ENCODE measurements at regions of chr11 and their contacts with region 1.

Region 1: DNA sequence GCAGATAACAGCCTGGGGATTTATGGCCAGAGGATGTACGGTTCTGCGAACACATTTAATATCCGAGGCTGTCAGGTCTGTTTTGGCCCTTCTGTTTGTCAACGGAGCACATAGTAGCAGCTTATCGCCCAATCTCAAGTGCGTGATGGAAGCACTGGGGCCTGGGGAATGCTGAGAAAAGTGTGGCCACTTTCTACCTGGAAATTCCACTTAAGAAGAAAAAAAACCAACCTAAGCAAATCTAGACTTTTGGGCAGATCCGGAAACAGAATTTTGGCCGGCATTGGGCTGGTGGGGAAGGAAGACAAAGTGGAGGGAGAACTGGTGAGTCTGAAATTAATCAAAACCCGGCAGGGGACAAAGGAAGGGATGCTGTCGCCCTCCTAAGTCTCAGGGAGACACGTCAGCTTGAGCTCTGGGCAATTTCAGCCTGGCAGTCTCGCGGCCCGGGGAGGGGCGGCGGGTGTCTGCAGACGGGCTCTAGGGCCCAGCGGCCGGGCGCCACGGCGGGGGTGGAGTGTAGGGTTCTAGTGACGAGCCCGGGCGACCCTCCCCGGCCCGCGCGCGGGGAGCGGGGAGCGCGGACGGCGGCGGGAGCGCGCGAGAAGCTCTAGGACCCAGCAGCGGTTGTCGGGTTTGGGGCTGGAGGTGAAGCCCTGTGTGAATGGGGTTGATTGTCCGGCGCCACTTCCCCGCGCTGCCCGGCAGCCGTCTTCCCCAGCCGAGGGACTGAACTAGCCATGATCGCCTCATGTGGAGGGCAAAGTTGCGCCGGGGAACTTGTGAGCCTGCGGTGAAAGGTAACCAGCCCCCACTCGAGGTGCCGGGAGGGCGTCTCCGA is at the start of gene AMOTL1:
- DNase-seq: peak; percentile 83
- H3K4me3 Mint-ChIP-seq: peak within 1 kb of the TSS; percentile 89
- H3K27ac Mint-ChIP-seq: peak within 1 kb of the TSS; percentile 90
- H3K4me1 Mint-ChIP-seq: peaks cover 32% of the 10 kb centered on the region
- H3K27me3 Mint-ChIP-seq: no peaks in the 10 kb centered on the region
- CTCF ChIP-seq: no peak
- total RNA-seq, gene AMOTL1: 76.6 and 77.0 TPM in 2 replicates

Region 2: GRCh38 chr11:94433049-94433448 is 334.9 kb before region 1 on chr11:
- CTCF ChIA-PET with region 1: no interaction called
- POLR2A ChIA-PET with region 1: no interaction called
- intact Hi-C with region 1: no loop called
- DNase-seq: no peak
- H3K4me3 Mint-ChIP-seq: no peak overlapping the region
- H3K27ac Mint-ChIP-seq: no peak overlapping the region
- H3K4me1 Mint-ChIP-seq: no peaks in the 10 kb centered on the region
- H3K27me3 Mint-ChIP-seq: no peaks in the 10 kb centered on the region
- CTCF ChIP-seq: no peak

Region 3: DNA sequence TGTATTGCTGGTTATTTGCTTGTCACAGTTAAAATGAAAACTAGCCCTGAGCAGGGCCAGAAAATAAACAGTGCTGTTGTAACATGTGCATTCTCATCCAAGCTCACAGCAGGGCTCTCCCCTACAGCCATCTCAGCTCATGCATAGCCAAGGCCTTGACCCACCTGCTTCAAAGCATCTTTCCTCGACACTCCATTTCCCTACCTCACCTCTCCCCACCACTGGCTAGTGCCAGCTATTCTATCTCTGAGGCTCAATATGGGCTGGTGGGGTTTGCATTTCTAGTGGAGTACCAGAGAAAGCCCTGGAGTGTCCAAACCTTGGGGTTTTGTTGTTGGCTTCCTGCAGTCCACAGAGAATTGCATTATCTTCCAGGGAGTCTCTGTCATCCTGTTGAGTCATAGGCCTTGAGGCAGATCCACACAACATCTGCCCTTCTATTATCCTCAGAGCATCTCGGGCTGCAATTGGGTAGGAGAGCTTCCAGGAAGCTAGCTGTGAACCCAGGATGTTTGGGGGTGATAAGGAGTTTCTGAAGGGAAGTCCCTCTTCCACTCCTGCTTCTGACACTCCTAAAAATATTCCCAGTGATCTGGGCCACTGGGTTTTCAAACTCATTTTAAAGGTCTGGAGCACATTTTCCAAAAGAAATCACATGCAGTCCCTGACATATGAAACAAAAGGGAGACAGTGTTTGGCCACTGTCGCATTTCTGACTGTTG is 35.9 kb before region 1 on chr11:
- CTCF ChIA-PET with region 1: interaction called, 3 read pairs
- POLR2A ChIA-PET with region 1: interaction called, 4 read pairs
- intact Hi-C with region 1: loop called (anchors 2 kb)
- DNase-seq: peak; percentile 95
- H3K4me3 Mint-ChIP-seq: no peak overlapping the region
- H3K27ac Mint-ChIP-seq: peak overlapping the region; percentile 77
- H3K4me1 Mint-ChIP-seq: peaks cover 34% of the 10 kb centered on the region
- H3K27me3 Mint-ChIP-seq: no peaks in the 10 kb centered on the region
- CTCF ChIP-seq: no peak

Region 4: DNA sequence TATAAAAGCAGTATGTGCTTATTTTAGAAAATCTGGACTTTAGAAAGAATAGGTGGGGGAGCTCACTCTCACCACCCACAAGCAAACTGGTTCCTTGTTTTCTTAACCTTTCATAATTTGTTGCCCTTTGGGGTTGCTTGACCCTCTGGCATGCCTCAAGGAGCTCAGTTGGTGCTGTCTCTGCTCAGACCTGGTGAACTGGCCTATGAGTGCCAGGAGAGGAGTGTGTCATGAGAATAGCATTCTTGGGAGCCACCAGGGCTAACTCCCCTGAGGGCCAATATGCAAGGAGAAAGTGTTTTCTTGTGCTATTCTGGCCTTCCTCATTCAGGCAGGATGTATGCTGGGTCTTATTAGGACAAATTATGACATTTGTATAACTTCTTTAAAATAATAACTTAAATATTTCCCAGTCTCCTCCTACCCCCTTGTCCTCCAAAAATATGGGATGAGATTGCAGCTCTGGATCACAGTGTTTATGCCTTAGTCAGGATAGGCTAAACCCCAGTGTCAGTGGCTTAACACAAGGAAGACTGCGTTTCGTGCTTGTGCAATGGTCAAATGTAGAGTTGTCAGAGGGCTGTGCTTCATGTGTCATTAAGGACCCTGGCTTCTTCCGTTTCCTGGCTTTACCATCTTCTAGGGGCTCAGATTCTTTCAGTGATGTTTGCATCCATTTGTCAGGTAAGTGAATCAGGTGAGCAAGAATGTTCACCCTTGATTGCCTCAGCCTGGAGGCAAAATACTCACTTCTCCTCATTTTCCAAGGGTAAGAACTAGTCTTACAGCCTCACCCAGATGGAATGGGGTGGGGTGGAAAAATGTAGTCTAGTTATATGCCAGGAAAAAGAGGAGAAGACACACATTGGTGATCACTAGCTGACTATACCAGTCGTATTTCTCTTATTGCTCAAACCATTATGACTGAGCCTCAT is 20.6 kb before region 1 on chr11:
- CTCF ChIA-PET with region 1: interaction called, 4 read pairs
- POLR2A ChIA-PET with region 1: interaction called, 52 read pairs
- intact Hi-C with region 1: loop called (anchors 2 kb)
- DNase-seq: peak; percentile 64
- H3K4me3 Mint-ChIP-seq: peak overlapping the region; percentile 2
- H3K27ac Mint-ChIP-seq: peak overlapping the region; percentile 95
- H3K4me1 Mint-ChIP-seq: peaks cover 59% of the 10 kb centered on the region
- H3K27me3 Mint-ChIP-seq: no peaks in the 10 kb centered on the region
- CTCF ChIP-seq: no peak

Region 5: GRCh38 chr11:94786264-94787126 is 18.5 kb after region 1 on chr11:
- CTCF ChIA-PET with region 1: interaction called, 40 read pairs
- POLR2A ChIA-PET with region 1: interaction called, 16 read pairs
- intact Hi-C with region 1: no loop called
- DNase-seq: peak; percentile 56
- H3K4me3 Mint-ChIP-seq: no peak overlapping the region
- H3K27ac Mint-ChIP-seq: no peak overlapping the region
- H3K4me1 Mint-ChIP-seq: peaks cover 53% of the 10 kb centered on the region
- H3K27me3 Mint-ChIP-seq: no peaks in the 10 kb centered on the region
- CTCF ChIP-seq: peak; percentile 47

Region 6: GRCh38 chr11:94954753-94955152 is 186.8 kb after region 1 on chr11:
- CTCF ChIA-PET with region 1: no interaction called
- POLR2A ChIA-PET with region 1: no interaction called
- intact Hi-C with region 1: no loop called
- DNase-seq: no peak
- H3K4me3 Mint-ChIP-seq: no peak overlapping the region
- H3K27ac Mint-ChIP-seq: no peak overlapping the region
- H3K4me1 Mint-ChIP-seq: peaks cover 8% of the 10 kb centered on the region
- H3K27me3 Mint-ChIP-seq: peaks cover 5% of the 10 kb centered on the region
- CTCF ChIP-seq: no peak

Measured in MCF 10A (cell line).